Naive thymus-derived CD4-positive, alpha-beta T cell (primary cell): ENCODE measurements at regions of chr5 and their contacts with region 1.

Region 1: GRCh38 chr5:140639148-140639979 is at the start of gene TMCO6:
- DNase-seq: peak; percentile 89 to 96 (median 94)
- ATAC-seq: peak; percentile 99
- H3K4me3 ChIP-seq: peak within 1 kb of the TSS; percentile 66
- H3K4me3 Mint-ChIP-seq: peak within 1 kb of the TSS; percentile 86 to 97 (median 93)
- H3K27ac ChIP-seq: peak within 1 kb of the TSS; percentile 79
- H3K27ac Mint-ChIP-seq: peak within 1 kb of the TSS; percentile 87 to 100 (median 93)
- H3K4me1 ChIP-seq: peaks cover 6% of the 10 kb centered on the region in 2 donors
- H3K4me1 Mint-ChIP-seq: peaks cover 21 to 54% (median 40%) of the 10 kb centered on the region in 7 donors
- H3K27me3 ChIP-seq: no peaks in the 10 kb centered on the region
- H3K27me3 Mint-ChIP-seq: no peaks in the 10 kb centered on the region
- total RNA-seq, gene TMCO6: 24.5 to 55.3 (median 36.4) TPM

Region 2: DNA sequence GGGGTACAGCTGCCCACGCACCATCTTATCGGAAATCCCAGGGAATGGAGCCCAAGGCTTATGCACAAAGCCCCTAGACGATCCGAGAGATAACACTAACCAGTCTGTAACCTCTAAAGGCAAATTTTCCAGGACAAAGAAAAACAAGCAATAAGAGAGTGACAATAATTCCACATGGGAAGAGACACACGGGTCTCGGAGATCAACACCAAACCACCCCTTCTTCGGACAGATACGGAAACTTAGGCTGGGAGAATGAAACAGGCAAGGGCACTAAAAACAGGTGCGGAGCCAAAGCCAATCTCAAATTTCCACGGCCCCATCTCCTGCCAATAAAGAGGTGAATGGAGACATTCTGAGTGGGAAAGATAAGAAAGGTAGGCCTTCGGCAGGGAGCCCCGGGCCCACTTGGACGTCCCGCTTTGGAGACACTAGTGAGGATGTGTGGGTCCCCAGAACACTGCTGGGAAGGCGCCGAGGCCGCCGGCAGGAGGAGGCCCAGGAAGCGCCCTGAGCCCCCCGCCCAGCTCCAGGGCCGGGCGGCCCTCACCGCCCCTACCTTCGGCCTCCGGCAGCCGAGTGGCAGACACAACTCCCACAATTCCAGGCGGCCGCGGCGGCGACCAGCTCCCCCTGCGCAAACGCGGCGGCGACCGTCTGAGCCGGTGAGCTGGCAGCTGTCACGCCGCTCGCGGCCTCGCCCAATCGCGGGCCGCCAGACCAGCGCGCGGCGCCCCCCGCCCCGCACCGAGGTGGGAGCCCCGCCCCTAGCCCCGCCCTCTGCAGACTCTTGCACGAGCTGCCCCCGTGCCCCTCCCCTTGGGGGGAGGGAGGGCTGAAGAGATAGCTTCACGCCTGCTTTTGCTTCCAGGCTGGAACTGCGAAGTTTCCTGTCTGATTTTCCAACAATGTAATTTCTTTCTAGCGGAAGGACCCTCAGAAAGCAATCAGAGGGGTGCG is 1441.4 kb before region 1 on chr5 and contains the start of gene SIL1:
- CTCF ChIA-PET with region 1: no interaction called
- POLR2A ChIA-PET with region 1: no interaction called
- intact Hi-C with region 1: loop called in 1 of 2 experiments (anchors 5 kb)
- DNase-seq: peak; percentile 88 to 94 (median 91)
- ATAC-seq: peak; percentile 99
- H3K4me3 ChIP-seq: peak within 1 kb of the TSS; percentile 97
- H3K4me3 Mint-ChIP-seq: peak within 1 kb of the TSS; percentile 83 to 96 (median 90)
- H3K27ac ChIP-seq: peak within 1 kb of the TSS; percentile 89
- H3K27ac Mint-ChIP-seq: peak within 1 kb of the TSS; percentile 86 to 96 (median 91)
- H3K4me1 ChIP-seq: peaks cover 8% of the 10 kb centered on the region in 2 donors
- H3K4me1 Mint-ChIP-seq: peaks cover 17 to 38% (median 26%) of the 10 kb centered on the region in 7 donors
- H3K27me3 ChIP-seq: no peaks in the 10 kb centered on the region
- H3K27me3 Mint-ChIP-seq: no peaks in the 10 kb centered on the region
- total RNA-seq, gene SIL1: 11.9 to 27.1 (median 22.8) TPM

Region 3: GRCh38 chr5:140267559-140268018 is 371.8 kb before region 1 on chr5:
- CTCF ChIA-PET with region 1: no interaction called
- POLR2A ChIA-PET with region 1: no interaction called
- intact Hi-C with region 1: no loop called
- DNase-seq: peak in 1 of 9 donors; percentile 3
- ATAC-seq: peak; percentile 24
- H3K4me3 ChIP-seq: no peak overlapping the region
- H3K4me3 Mint-ChIP-seq: peak overlapping the region; percentile 26 to 78 (median 64)
- H3K27ac ChIP-seq: peak overlapping the region; percentile 57
- H3K27ac Mint-ChIP-seq: peak overlapping the region; percentile 64 to 85 (median 76)
- H3K4me1 ChIP-seq: peaks cover 0 to 24% of the 10 kb centered on the region in 2 donors
- H3K4me1 Mint-ChIP-seq: peaks cover 25 to 51% (median 38%) of the 10 kb centered on the region in 7 donors
- H3K27me3 ChIP-seq: no peaks in the 10 kb centered on the region
- H3K27me3 Mint-ChIP-seq: no peaks in the 10 kb centered on the region

Region 4: GRCh38 chr5:140302786-140303639 is 336.4 kb before region 1 on chr5 and contains the start of gene PFDN1:
- CTCF ChIA-PET with region 1: no interaction called
- POLR2A ChIA-PET with region 1: no interaction called
- intact Hi-C with region 1: loop called in 1 of 2 experiments (anchors 2 kb)
- DNase-seq: peak; percentile 79 to 94 (median 89)
- ATAC-seq: peak; percentile 99
- H3K4me3 ChIP-seq: peak within 1 kb of the TSS; percentile 90
- H3K4me3 Mint-ChIP-seq: peak within 1 kb of the TSS; percentile 92 to 100 (median 98)
- H3K27ac ChIP-seq: peak within 1 kb of the TSS; percentile 91
- H3K27ac Mint-ChIP-seq: peak within 1 kb of the TSS; percentile 95 to 100 (median 98)
- H3K4me1 ChIP-seq: peaks cover 10 to 11% of the 10 kb centered on the region in 2 donors
- H3K4me1 Mint-ChIP-seq: peaks cover 4 to 39% (median 33%) of the 10 kb centered on the region in 7 donors
- H3K27me3 ChIP-seq: no peaks in the 10 kb centered on the region
- H3K27me3 Mint-ChIP-seq: peaks cover 0 to 9% (median 5%) of the 10 kb centered on the region in 5 donors
- total RNA-seq, gene PFDN1: 24.8 to 52.7 (median 28.2) TPM

Region 5: GRCh38 chr5:140547508-140548299 is 91.7 kb before region 1 on chr5 and contains the start of gene EIF4EBP3:
- CTCF ChIA-PET with region 1: interaction called, 12 read pairs
- POLR2A ChIA-PET with region 1: interaction called, 21 read pairs
- intact Hi-C with region 1: loop called (anchors 1 kb)
- DNase-seq: peak; percentile 76 to 90 (median 88)
- ATAC-seq: peak; percentile 98
- H3K4me3 ChIP-seq: peak within 1 kb of the TSS; percentile 83
- H3K4me3 Mint-ChIP-seq: peak within 1 kb of the TSS; percentile 85 to 99 (median 92)
- H3K27ac ChIP-seq: peak within 1 kb of the TSS; percentile 89
- H3K27ac Mint-ChIP-seq: peak within 1 kb of the TSS; percentile 93 to 99 (median 98)
- H3K4me1 ChIP-seq: peaks cover 12 to 20% of the 10 kb centered on the region in 2 donors
- H3K4me1 Mint-ChIP-seq: peaks cover 22 to 49% (median 37%) of the 10 kb centered on the region in 7 donors
- H3K27me3 ChIP-seq: no peaks in the 10 kb centered on the region
- H3K27me3 Mint-ChIP-seq: no peaks in the 10 kb centered on the region
- total RNA-seq, gene EIF4EBP3: 12.5 to 19.5 (median 16.2) TPM

Region 6: GRCh38 chr5:140628711-140629110 is 10.7 kb before region 1 on chr5:
- CTCF ChIA-PET with region 1: no interaction called
- POLR2A ChIA-PET with region 1: no interaction called
- intact Hi-C with region 1: no loop called
- DNase-seq: no peak
- ATAC-seq: no peak
- H3K4me3 ChIP-seq: no peak overlapping the region
- H3K4me3 Mint-ChIP-seq: no peak overlapping the region
- H3K27ac ChIP-seq: no peak overlapping the region
- H3K27ac Mint-ChIP-seq: no peak overlapping the region
- H3K4me1 ChIP-seq: peaks cover 0 to 9% of the 10 kb centered on the region in 2 donors
- H3K4me1 Mint-ChIP-seq: peaks cover 12 to 26% (median 14%) of the 10 kb centered on the region in 7 donors
- H3K27me3 ChIP-seq: no peaks in the 10 kb centered on the region
- H3K27me3 Mint-ChIP-seq: peaks cover 0 to 38% (median 0%) of the 10 kb centered on the region in 5 donors

Region 7: GRCh38 chr5:140664359-140665119 is 25.2 kb after region 1 on chr5 and contains the start of gene WDR55:
- CTCF ChIA-PET with region 1: no interaction called
- POLR2A ChIA-PET with region 1: interaction called, 6 read pairs
- intact Hi-C with region 1: loop called (anchors 1 kb)
- DNase-seq: peak; percentile 91 to 98 (median 94)
- ATAC-seq: peak; percentile 97
- H3K4me3 ChIP-seq: peak within 1 kb of the TSS; percentile 95
- H3K4me3 Mint-ChIP-seq: peak within 1 kb of the TSS; percentile 96 to 100 (median 98)
- H3K27ac ChIP-seq: peak within 1 kb of the TSS; percentile 97
- H3K27ac Mint-ChIP-seq: peak within 1 kb of the TSS; percentile 93 to 100 (median 98)
- H3K4me1 ChIP-seq: peaks cover 0 to 8% of the 10 kb centered on the region in 2 donors
- H3K4me1 Mint-ChIP-seq: peaks cover 17 to 48% (median 38%) of the 10 kb centered on the region in 7 donors
- H3K27me3 ChIP-seq: no peaks in the 10 kb centered on the region
- H3K27me3 Mint-ChIP-seq: no peaks in the 10 kb centered on the region
- total RNA-seq, gene WDR55: 28.5 to 47.6 (median 37.8) TPM

Region 8: DNA sequence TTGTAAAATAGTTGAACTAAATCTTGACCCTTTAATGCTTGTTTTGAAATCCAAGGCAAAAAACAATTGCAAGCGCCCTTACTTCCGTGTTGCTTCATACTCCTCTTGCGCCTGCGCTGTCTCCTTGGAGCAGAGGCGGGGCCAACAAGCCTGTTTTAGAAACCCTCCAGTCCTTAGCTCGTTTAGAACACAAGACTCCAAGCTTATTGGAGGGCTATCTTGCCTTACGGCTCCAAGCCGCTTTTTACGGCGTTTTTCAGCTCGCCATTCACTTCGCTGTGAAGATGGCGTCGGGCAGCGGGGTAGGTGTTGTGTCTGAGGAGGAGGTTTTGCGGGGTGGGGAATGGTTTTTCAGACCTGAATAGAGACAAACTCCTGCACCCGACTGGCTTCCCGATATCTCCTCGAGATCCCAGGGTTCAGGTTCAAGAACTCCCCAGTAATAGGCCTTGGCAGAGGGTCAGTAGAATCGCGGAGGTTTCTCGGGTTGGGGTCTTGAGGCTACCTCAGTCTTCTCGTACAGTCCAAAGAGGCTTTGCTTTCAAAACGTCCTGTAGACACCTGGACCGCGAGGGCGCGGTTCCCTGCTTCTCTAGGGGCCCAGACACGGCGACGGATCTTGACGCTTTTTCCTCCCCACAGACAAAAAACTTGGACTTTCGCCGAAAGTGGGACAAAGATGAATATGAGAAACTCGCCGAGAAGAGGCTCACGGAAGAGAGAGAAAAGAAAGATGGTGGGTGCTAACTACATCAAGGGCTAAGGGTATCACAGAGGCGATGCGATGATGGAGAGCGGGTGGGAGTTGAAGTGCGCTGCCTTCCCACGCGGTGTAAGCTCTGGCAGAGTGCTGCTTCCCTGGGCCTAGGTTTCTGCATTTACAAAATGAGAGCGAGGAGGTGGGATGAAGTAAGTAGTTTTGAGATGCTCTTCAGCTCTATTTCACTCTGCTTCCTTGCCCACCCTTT is 61.1 kb after region 1 on chr5 and contains the start of gene ZMAT2:
- CTCF ChIA-PET with region 1: interaction called, 3 read pairs
- POLR2A ChIA-PET with region 1: interaction called, 4 read pairs
- intact Hi-C with region 1: loop called (anchors 1 to 2 kb)
- DNase-seq: peak; percentile 74 to 97 (median 92)
- ATAC-seq: peak; percentile 100
- H3K4me3 ChIP-seq: peak within 1 kb of the TSS; percentile 78
- H3K4me3 Mint-ChIP-seq: peak within 1 kb of the TSS; percentile 93 to 100 (median 98)
- H3K27ac ChIP-seq: peak within 1 kb of the TSS; percentile 87
- H3K27ac Mint-ChIP-seq: peak within 1 kb of the TSS; percentile 90 to 99 (median 97)
- H3K4me1 ChIP-seq: peaks cover 4 to 14% of the 10 kb centered on the region in 2 donors
- H3K4me1 Mint-ChIP-seq: peaks cover 18 to 35% (median 29%) of the 10 kb centered on the region in 7 donors
- H3K27me3 ChIP-seq: no peaks in the 10 kb centered on the region
- H3K27me3 Mint-ChIP-seq: no peaks in the 10 kb centered on the region
- total RNA-seq, gene ZMAT2: 37.7 to 63.0 (median 55.1) TPM